ENCODE measurements at regions of chr2 and their contacts with region 1.

Region 1: DNA sequence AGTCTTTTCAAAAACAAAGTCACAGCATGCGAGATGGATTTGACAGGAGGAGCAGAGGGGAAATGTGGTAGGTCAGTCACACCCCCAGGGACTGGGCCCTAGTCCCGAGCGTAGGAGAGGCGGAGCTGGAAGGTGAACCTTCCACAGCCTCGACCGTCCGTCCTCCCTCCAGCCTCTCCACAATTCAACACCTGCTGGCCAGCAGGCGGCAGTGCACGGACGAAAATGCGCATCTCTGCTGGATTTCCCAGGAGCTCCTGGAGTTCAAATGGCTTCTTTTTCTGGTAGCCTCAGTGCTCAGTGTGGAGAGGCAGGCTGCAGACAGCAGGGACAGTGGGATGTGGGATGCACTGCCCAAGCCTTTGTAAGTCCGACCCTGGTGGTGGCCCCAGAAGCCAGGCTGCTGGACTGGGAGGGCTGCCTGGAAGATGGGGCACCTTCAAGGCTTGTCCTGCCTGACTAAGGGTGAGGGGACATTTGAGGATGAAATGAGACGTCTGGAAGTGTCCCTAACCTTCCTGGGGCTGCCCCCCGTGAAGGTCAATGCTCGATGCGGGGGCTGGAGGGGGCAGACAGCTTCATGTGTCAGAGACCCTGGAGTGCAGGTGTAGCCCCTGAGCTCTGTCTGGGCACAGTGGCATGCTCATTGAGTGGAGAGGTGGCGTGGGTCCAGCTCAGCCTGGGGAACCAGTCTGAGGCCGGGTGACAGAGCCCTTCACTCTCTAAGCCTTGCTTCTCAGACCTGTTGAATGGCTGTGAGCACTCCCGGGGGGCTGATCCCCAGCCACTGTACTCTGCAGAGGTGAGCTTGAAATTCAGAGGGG is 189.5 kb downstream of the TFCP2L1 start:
- DNase-seq: peak in 1 of 2 experiments; percentile 81
- H3K4me3 ChIP-seq: no peak overlapping the region
- H3K27ac ChIP-seq: no peak overlapping the region
- H3K4me1 ChIP-seq: no peaks in the 10 kb centered on the region; a peak in 1 of 7 replicates
- H3K27me3 ChIP-seq: no peaks in the 10 kb centered on the region; a peak in 4 of 7 replicates
- CTCF ChIP-seq: peak; percentile 93 to 96 (median 93)
- EP300 ChIP-seq: no peak
- POLR2A ChIP-seq: no peak
- RAD21 ChIP-seq: peak; percentile 85 to 91

Region 2: GRCh38 chr2:121140734-121141133 is 45.3 kb after region 1 on chr2:
- CTCF ChIA-PET with region 1: interaction called, 10 read pairs
- POLR2A ChIA-PET with region 1: no interaction called
- DNase-seq: no peak
- H3K4me3 ChIP-seq: no peak overlapping the region
- H3K27ac ChIP-seq: no peak overlapping the region
- H3K4me1 ChIP-seq: no peaks in the 10 kb centered on the region
- H3K27me3 ChIP-seq: no peaks in the 10 kb centered on the region
- CTCF ChIP-seq: no peak
- EP300 ChIP-seq: no peak
- POLR2A ChIP-seq: no peak
- RAD21 ChIP-seq: no peak

Region 3: GRCh38 chr2:121159291-121160071 is 64.0 kb after region 1 on chr2:
- CTCF ChIA-PET with region 1: interaction called, 10 read pairs
- POLR2A ChIA-PET with region 1: no interaction called
- DNase-seq: no peak
- H3K4me3 ChIP-seq: no peak overlapping the region
- H3K27ac ChIP-seq: no peak overlapping the region
- H3K4me1 ChIP-seq: no peaks in the 10 kb centered on the region
- H3K27me3 ChIP-seq: no peaks in the 10 kb centered on the region
- CTCF ChIP-seq: no peak
- EP300 ChIP-seq: no peak
- POLR2A ChIP-seq: no peak
- RAD21 ChIP-seq: no peak

Region 4: GRCh38 chr2:121297217-121297830 is 201.9 kb after region 1 on chr2:
- CTCF ChIA-PET with region 1: interaction called, 13 read pairs
- POLR2A ChIA-PET with region 1: no interaction called
- DNase-seq: no peak
- H3K4me3 ChIP-seq: no peak overlapping the region
- H3K27ac ChIP-seq: no peak overlapping the region
- H3K4me1 ChIP-seq: no peaks in the 10 kb centered on the region
- H3K27me3 ChIP-seq: peaks cover 0 to 1% (median 0%) of the 10 kb centered on the region in 4 experiments; a peak in 1 of 7 replicates
- CTCF ChIP-seq: peak; percentile 48 to 95 (median 95); a peak in 3 of 4 replicates
- EP300 ChIP-seq: no peak
- POLR2A ChIP-seq: no peak
- RAD21 ChIP-seq: peak; percentile 59 to 60

Region 5: DNA sequence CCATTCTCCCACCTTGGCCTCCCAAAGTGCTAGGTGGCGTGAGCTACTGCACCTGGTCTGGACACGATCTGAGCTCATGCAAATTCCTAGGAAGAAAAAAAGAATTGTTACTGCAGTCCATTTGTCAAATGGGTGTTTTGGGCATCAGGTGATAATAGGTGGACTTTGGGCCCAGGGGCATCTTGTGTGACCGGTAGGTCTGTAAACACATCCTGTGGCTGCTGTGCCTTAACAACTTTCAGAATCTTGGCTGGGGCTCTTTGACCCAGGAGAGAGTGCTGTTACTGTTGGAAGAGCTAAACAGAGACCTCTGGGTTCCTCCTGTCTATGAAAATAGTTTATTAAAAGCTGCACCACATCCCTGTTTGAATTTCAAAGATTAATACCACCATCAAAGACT is 224.5 kb after region 1 on chr2:
- CTCF ChIA-PET with region 1: interaction called, 16 read pairs
- POLR2A ChIA-PET with region 1: no interaction called
- DNase-seq: no peak
- H3K4me3 ChIP-seq: no peak overlapping the region
- H3K27ac ChIP-seq: no peak overlapping the region
- H3K4me1 ChIP-seq: no peaks in the 10 kb centered on the region
- H3K27me3 ChIP-seq: no peaks in the 10 kb centered on the region
- CTCF ChIP-seq: no peak
- EP300 ChIP-seq: no peak
- POLR2A ChIP-seq: no peak
- RAD21 ChIP-seq: no peak

Region 6: GRCh38 chr2:121345887-121346286 is 250.4 kb after region 1 on chr2:
- CTCF ChIA-PET with region 1: interaction called, 12 read pairs
- POLR2A ChIA-PET with region 1: no interaction called
- DNase-seq: no peak
- H3K4me3 ChIP-seq: no peak overlapping the region
- H3K27ac ChIP-seq: no peak overlapping the region
- H3K4me1 ChIP-seq: no peaks in the 10 kb centered on the region
- H3K27me3 ChIP-seq: no peaks in the 10 kb centered on the region
- CTCF ChIP-seq: no peak
- EP300 ChIP-seq: no peak
- POLR2A ChIP-seq: no peak
- RAD21 ChIP-seq: no peak

Region 7: GRCh38 chr2:121356058-121356640 is 260.7 kb after region 1 on chr2:
- CTCF ChIA-PET with region 1: interaction called, 52 read pairs
- POLR2A ChIA-PET with region 1: no interaction called
- DNase-seq: peak; percentile 46 to 71
- H3K4me3 ChIP-seq: no peak overlapping the region
- H3K27ac ChIP-seq: no peak overlapping the region
- H3K4me1 ChIP-seq: no peaks in the 10 kb centered on the region
- H3K27me3 ChIP-seq: no peaks in the 10 kb centered on the region
- CTCF ChIP-seq: peak in 2 of 3 experiments; percentile 75 to 85; a peak in 3 of 4 replicates
- EP300 ChIP-seq: no peak
- POLR2A ChIP-seq: no peak
- RAD21 ChIP-seq: peak; percentile 77 to 80

Measured in H1 (cell line).